PC-3 (cell line): ENCODE measurements at regions of chr12 and their contacts with region 1.

Region 1: GRCh38 chr12:106986625-106987430 is at the start of gene MTERF2:
- DNase-seq: peak; percentile 96
- ATAC-seq: peak; percentile 89
- H3K4me3 ChIP-seq: peak within 1 kb of the TSS; percentile 86
- H3K27ac ChIP-seq: 0 out of 2 replicates have a peak within 1 kb of the TSS, but pooled peaks have one; percentile 16
- H3K4me1 ChIP-seq: peaks cover 26% of the 10 kb centered on the region
- H3K27me3 ChIP-seq: no peaks in the 10 kb centered on the region
- CTCF ChIP-seq: no peak
- total RNA-seq, gene MTERF2: 10.7 and 14.2 TPM in 2 replicates

Region 2: GRCh38 chr12:107027636-107028053 is 40.8 kb after region 1 on chr12:
- CTCF ChIA-PET with region 1: no interaction called
- POLR2A ChIA-PET with region 1: no interaction called
- intact Hi-C with region 1: loop called (anchors 1 kb)
- DNase-seq: peak; percentile 98
- ATAC-seq: peak; percentile 97
- H3K4me3 ChIP-seq: no peak overlapping the region
- H3K27ac ChIP-seq: peak overlapping the region; percentile 52
- H3K4me1 ChIP-seq: peaks cover 29% of the 10 kb centered on the region
- H3K27me3 ChIP-seq: no peaks in the 10 kb centered on the region
- CTCF ChIP-seq: no peak